ENCODE measurements at regions of chr2 and their contacts with region 1.

Region 1: GRCh38 chr2:228681426-228681825 is 499.9 kb upstream of the SPHKAP start:
- DNase-seq: no peak
- H3K4me3 ChIP-seq: no peak overlapping the region
- CTCF ChIP-seq: peak; percentile 32

Region 2: GRCh38 chr2:229273723-229274338 is 592.4 kb after region 1 on chr2:
- CTCF ChIA-PET with region 1: interaction called, 15 read pairs
- POLR2A ChIA-PET with region 1: no interaction called
- DNase-seq: no peak
- H3K4me3 ChIP-seq: no peak overlapping the region
- CTCF ChIP-seq: peak; percentile 70

Measured in AG04449 (cell line).